HepG2 (cell line): ENCODE measurements at regions of chr17 and their contacts with region 1.

Region 1: DNA sequence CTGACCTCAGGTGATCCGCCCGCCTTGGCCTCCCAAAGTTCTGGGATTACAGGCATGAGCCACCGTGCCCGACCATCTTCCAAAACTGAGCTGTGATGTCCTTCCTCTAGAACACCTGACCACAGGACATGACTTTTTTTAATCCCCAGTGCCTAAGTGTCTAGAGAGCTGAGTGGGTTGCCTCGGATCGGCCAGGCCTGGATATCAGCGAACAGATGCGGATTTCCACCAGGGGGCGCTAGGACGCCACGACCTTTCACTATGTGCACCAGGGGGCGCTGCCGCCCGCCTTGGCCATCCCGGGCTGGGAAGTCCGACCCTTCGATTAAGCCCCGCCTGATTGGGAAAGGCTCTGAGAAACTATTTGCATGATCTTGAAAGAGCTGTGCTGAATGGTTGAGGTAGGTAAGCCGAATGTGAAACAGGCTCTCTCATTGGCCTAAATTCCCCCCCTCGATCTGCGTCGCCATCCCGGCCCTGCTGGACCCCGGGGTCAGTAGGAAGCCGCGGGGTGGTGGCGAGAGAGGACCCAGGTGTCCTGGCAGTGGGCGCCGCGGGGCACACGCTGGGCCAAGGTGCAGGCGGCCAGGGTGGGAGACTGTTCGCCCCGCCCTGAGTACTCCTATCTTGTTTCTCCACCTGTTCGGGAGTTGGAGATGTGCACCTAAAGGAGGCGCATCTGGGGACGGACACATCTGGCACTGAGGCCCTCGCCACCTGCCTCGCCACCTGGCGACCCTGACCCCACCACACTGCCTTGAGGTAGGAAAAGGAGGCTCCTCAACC is at the start of gene ACBD4:
- DNase-seq: peak; percentile 100
- ATAC-seq: peak; percentile 85
- H3K4me3 ChIP-seq: peak within 1 kb of the TSS; percentile 70 to 83 (median 78)
- H3K27ac ChIP-seq: peak within 1 kb of the TSS; percentile 64
- H3K4me1 ChIP-seq: peaks cover 43% of the 10 kb centered on the region
- H3K27me3 ChIP-seq: no peaks in the 10 kb centered on the region
- CTCF ChIP-seq: peak; percentile 100
- EP300 ChIP-seq: peak in 1 of 2 experiments; percentile 41; a peak in 2 of 4 replicates
- POLR2A ChIP-seq: peak; percentile 71 to 97
- RAD21 ChIP-seq: peak; percentile 100
- total RNA-seq, gene ACBD4: 8.8 and 16.1 TPM in 2 replicates

Region 2: GRCh38 chr17:45086865-45087503 is 48.4 kb before region 1 on chr17:
- CTCF ChIA-PET with region 1: no interaction called
- POLR2A ChIA-PET with region 1: no interaction called
- in situ Hi-C with region 1: no loop called
- intact Hi-C with region 1: no loop called
- DNase-seq: no peak
- ATAC-seq: peak; percentile 23; the same call in 1 of the 3 replicates
- H3K4me3 ChIP-seq: no peak overlapping the region
- H3K27ac ChIP-seq: peak overlapping the region; percentile 19
- H3K4me1 ChIP-seq: peaks cover 23% of the 10 kb centered on the region
- H3K27me3 ChIP-seq: no peaks in the 10 kb centered on the region
- CTCF ChIP-seq: no peak
- EP300 ChIP-seq: no peak
- POLR2A ChIP-seq: no peak
- RAD21 ChIP-seq: no peak

Region 3: DNA sequence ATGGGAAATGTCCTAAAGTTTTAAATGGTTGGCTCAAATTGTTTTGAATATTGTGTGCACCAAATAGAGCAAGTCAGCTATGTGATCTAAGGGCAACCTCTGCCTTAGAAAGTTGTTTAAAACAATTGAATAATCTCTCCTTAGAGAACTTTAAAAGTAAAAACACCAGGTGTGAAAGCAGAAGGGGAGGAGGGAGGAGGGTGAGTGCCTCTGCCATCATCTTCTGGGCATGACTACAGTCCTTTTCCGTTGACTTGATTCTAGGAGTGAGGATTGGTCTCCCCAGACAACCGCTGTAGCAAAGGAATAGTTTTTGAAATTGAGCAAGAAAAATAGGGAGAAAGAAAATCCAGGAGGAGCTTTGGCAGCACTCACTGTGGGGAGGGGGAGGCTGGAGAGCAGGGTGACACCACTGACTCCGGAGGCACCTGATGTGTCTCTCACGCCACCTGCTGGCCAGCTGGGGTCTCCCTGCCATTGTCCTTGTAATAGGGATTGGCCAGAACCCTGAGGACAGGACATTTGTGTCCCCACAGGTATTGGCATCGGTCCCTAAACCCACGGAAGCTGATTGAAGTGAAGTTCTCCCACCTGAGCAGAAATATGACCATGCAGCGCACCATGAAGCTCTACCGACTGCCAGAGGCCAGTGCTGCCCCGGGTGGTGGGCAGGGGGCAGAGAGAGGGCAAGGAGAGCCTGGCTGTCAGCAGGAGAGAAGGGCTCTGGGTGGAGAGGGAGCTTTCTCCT is 36.3 kb before region 1 on chr17:
- CTCF ChIA-PET with region 1: interaction called, 26 read pairs
- POLR2A ChIA-PET with region 1: interaction called, 3 read pairs
- in situ Hi-C with region 1: loop called (anchors 5 kb)
- intact Hi-C with region 1: loop called (anchors 2 kb)
- DNase-seq: peak; percentile 85
- ATAC-seq: peak; percentile 81
- H3K4me3 ChIP-seq: no peak overlapping the region
- H3K27ac ChIP-seq: no peak overlapping the region
- H3K4me1 ChIP-seq: peaks cover 22% of the 10 kb centered on the region
- H3K27me3 ChIP-seq: no peaks in the 10 kb centered on the region
- CTCF ChIP-seq: peak; percentile 96
- EP300 ChIP-seq: no peak
- POLR2A ChIP-seq: no peak
- RAD21 ChIP-seq: peak; percentile 84

Region 4: GRCh38 chr17:45123930-45124796 is 11.2 kb before region 1 on chr17:
- CTCF ChIA-PET with region 1: interaction called, 8 read pairs
- POLR2A ChIA-PET with region 1: interaction called, 10 read pairs
- in situ Hi-C with region 1: no loop called
- intact Hi-C with region 1: no loop called
- DNase-seq: peak; percentile 86
- ATAC-seq: peak; percentile 79
- H3K4me3 ChIP-seq: peak overlapping the region; percentile 19 to 60 (median 29); a peak in 2 of 6 replicates
- H3K27ac ChIP-seq: peak overlapping the region; percentile 63
- H3K4me1 ChIP-seq: peaks cover 67% of the 10 kb centered on the region
- H3K27me3 ChIP-seq: no peaks in the 10 kb centered on the region
- CTCF ChIP-seq: 0 out of 2 replicates have a peak, but pooled peaks have one; percentile 5
- EP300 ChIP-seq: peak; percentile 25 to 74; a peak in 2 of 4 replicates
- POLR2A ChIP-seq: no peak
- RAD21 ChIP-seq: 0 out of 2 replicates have a peak, but pooled peaks have one; percentile 10

Region 5: DNA sequence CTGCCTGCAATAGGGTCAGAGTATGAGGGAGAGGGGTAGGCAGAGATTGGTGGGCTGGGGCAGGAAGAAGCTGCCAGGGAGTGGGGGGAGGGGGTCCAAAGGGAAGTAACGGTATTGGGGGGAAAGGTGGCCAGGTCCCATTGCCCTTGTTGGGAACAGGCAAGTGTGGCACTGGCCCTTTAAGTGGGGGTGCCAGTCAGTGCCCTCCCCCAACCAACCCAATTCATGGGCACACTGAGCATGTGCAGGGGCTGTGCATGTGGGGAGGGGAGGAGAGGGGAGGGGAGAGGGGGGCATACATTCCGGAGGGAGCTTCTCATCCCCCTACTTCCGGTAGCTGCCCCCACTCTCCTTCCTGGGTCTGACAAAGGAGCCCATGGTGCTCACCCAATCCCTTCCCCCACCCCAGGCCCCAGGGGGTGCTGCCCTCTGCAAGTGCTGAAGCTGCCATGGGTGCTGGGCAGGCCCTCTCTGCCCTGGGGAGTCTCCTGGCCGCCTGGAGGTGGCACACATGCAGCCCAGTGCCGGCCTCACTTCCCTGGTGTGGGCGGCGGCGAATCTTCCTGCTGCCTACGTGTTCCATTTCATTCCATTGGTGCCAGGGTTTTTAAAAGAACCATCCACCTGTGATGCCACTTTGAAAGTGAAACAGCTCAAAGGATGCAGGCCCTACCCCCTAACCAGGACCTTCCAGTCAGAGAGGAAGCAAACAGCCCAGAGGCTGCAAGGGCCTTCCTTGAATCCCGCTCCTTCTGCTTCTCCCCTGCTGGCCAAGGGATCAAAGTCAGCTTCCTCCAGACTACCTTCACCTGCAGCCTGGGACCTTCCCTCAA is 37.3 kb after region 1 on chr17:
- CTCF ChIA-PET with region 1: interaction called, 5 read pairs
- POLR2A ChIA-PET with region 1: interaction called, 35 read pairs
- in situ Hi-C with region 1: no loop called
- intact Hi-C with region 1: no loop called
- DNase-seq: peak; percentile 97
- ATAC-seq: peak; percentile 66
- H3K4me3 ChIP-seq: peak overlapping the region; percentile 53 to 74 (median 65)
- H3K27ac ChIP-seq: peak overlapping the region; percentile 97
- H3K4me1 ChIP-seq: peaks cover 70% of the 10 kb centered on the region
- H3K27me3 ChIP-seq: no peaks in the 10 kb centered on the region
- CTCF ChIP-seq: peak; percentile 51
- EP300 ChIP-seq: peak; percentile 47 to 74; a peak in 2 of 4 replicates
- POLR2A ChIP-seq: peak; percentile 75 to 80
- RAD21 ChIP-seq: peak; percentile 69

Region 6: GRCh38 chr17:45218895-45219661 is 83.7 kb after region 1 on chr17:
- CTCF ChIA-PET with region 1: interaction called, 20 read pairs
- POLR2A ChIA-PET with region 1: interaction called, 4 read pairs
- in situ Hi-C with region 1: no loop called
- intact Hi-C with region 1: no loop called
- DNase-seq: peak; percentile 76
- ATAC-seq: peak; percentile 79
- H3K4me3 ChIP-seq: no peak overlapping the region
- H3K27ac ChIP-seq: no peak overlapping the region
- H3K4me1 ChIP-seq: peaks cover 6% of the 10 kb centered on the region; the same call in 1 of the 2 replicates
- H3K27me3 ChIP-seq: peaks cover 17 to 44% of the 10 kb centered on the region in 2 experiments; a peak in 4 of 5 replicates
- CTCF ChIP-seq: peak; percentile 98
- EP300 ChIP-seq: no peak
- POLR2A ChIP-seq: no peak
- RAD21 ChIP-seq: peak; percentile 94

Region 7: DNA sequence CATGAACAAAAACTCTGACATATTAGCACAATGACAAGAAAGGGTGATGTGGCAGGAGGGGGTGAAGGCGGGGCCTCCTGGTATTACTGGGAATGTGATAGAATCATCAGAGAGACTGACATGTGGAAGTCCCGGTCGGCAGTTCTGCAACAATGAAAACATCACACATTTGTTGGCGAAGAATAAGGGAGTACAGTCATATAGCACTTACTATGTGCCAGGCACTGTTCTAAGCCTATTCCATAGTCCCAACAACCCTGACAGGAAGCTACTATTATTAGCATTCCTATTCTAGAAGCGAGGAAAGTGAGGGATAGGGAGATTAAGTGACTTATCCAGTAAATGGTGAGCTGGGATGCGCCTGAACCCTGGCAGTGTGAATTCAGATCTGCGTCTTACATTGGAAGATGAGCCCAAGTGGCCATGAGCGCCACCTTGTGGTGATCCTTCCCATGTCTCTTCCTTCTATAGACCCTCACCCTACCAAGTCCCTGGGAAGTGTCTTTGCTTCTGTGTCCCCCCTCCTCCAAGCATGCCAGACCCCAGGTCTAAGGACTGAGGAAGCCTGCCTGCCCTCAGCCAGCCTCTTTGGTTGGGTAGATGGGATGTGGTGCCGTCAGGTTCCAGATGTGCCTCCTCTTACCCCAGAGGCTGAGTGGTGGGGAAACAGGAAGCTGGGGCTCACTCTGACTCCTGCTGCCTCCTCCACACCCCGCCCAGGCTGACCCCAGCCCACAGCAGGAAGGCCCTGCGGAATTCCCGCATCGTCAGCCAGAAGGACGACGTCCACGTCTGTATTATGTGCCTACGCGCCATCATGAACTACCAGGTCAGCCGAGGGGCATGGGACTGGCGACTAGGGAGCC is 100.3 kb after region 1 on chr17:
- CTCF ChIA-PET with region 1: interaction called, 51 read pairs
- POLR2A ChIA-PET with region 1: interaction called, 15 read pairs
- in situ Hi-C with region 1: no loop called
- intact Hi-C with region 1: loop called (anchors 5 kb)
- DNase-seq: peak; percentile 58
- ATAC-seq: peak; percentile 13
- H3K4me3 ChIP-seq: no peak overlapping the region
- H3K27ac ChIP-seq: no peak overlapping the region
- H3K4me1 ChIP-seq: peaks cover 14% of the 10 kb centered on the region
- H3K27me3 ChIP-seq: peaks cover 4 to 30% of the 10 kb centered on the region in 2 experiments
- CTCF ChIP-seq: peak; percentile 85
- EP300 ChIP-seq: no peak
- POLR2A ChIP-seq: no peak
- RAD21 ChIP-seq: no peak

Region 8: DNA sequence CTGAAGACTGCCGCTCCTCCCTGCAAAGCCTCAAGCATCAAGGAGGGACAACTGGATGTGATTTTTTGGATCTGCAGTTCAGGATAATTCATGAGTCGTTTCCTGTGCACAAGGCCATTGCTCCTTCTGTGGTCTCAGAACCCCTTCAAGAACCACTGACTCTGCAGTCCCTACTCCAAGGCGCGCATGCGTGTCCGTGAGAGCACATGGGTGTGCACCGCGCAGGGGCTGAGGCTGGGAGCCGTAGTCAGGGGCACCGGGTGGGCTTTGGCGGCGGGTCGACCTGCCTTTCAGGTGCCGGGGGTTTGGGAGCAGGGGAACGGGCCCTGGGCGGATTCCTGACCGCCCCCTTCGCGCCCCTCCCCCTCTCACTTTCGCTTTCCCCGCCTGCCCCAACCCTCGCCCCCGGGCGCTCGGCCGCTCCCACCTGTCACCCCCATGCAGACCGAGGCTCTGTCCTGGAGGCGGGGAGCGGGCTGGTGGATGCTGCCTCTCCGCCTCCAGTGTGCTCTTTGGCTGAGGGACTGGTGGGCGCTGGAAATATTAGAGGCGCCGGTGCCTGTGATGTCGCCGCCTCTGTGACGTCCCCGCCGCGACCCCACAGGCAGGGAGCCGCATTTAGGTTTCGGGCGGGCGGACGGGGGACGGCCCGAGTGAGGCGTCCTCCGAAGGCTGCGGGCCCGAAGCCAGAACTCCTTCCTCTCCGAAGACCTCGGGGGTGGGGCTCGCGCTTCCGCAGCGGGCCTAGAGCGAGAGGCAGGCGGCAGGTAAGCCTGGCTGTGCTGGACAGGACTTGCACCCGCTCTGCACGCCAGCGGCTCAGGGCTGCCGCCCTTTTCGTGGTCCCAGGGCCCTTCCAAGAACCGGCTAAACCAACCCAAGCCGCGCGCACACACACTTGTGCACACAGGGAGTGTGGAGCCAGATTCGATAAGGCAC is 126.5 kb after region 1 on chr17 and contains the start of gene SPATA32:
- CTCF ChIA-PET with region 1: no interaction called
- POLR2A ChIA-PET with region 1: no interaction called
- in situ Hi-C with region 1: no loop called
- intact Hi-C with region 1: no loop called
- DNase-seq: no peak
- ATAC-seq: no peak; the same call in 2 of the 3 replicates
- H3K4me3 ChIP-seq: no peak within 1 kb of the TSS
- H3K27ac ChIP-seq: no peak within 1 kb of the TSS
- H3K4me1 ChIP-seq: no peaks in the 10 kb centered on the region
- H3K27me3 ChIP-seq: peaks cover 0 to 12% of the 10 kb centered on the region in 2 experiments; a peak in 2 of 5 replicates
- CTCF ChIP-seq: no peak
- EP300 ChIP-seq: no peak
- POLR2A ChIP-seq: no peak
- RAD21 ChIP-seq: no peak
- total RNA-seq, gene SPATA32: not detected in 2 replicates

Region 9: DNA sequence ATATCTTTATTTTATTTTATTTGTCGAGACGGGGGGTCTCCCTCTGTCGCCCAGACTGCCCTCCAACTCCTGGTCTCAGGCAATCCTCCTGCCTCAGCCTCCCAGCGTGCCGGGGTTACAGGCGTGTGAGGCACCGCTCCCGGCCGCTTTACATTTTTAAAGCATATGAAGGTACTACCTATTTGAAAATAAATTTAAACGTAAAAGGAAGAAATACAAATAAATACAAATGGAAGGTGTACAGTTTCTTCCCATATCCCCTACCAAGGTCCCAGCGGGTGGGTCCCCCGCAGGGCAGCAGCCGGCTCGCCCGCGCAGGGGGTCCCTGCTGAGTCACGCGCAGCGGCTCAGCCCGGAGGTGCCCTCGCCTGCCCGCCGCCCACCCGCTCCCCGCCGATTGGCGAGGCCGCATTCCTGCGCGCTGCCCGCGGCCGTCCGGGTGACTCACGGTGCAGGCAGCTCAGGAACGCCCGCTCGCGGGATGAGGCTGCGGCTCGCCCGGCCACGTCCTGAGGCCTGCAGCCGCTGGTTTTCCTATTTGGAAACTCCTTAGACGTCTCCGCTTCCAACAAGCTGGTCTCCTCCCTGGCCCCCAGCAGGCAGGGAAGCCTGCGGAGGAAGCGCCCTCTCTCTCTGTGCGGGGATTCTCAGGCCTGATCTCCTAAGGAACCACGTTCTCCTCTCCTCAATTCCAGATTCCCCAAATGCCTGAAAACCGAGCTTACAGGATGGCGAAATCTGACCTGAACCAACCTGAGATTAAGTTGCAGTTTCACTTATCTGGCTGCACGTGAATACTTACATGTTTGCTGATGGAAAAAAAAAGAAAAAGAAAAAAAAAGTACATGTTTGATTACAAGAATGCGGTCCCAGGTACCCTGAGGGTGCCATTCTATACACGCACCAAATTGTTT is 236.3 kb after region 1 on chr17:
- CTCF ChIA-PET with region 1: no interaction called
- POLR2A ChIA-PET with region 1: no interaction called
- in situ Hi-C with region 1: loop called (anchors 10 kb)
- intact Hi-C with region 1: no loop called
- DNase-seq: peak; percentile 89
- ATAC-seq: peak; percentile 97
- H3K4me3 ChIP-seq: peak overlapping the region; percentile 66 to 76 (median 67)
- H3K27ac ChIP-seq: peak overlapping the region; percentile 66
- H3K4me1 ChIP-seq: peaks cover 47% of the 10 kb centered on the region
- H3K27me3 ChIP-seq: peaks cover 0 to 3% of the 10 kb centered on the region in 2 experiments; a peak in 1 of 5 replicates
- CTCF ChIP-seq: peak; percentile 48
- EP300 ChIP-seq: peak in 1 of 2 experiments; percentile 18; a peak in 2 of 4 replicates
- POLR2A ChIP-seq: peak in 1 of 2 experiments; percentile 87; a peak in 2 of 4 replicates
- RAD21 ChIP-seq: peak; percentile 65